Left cardiac atrium (tissue), 4 donors: ENCODE measurements at regions of chr9 and their contacts with region 1.

Region 1: DNA sequence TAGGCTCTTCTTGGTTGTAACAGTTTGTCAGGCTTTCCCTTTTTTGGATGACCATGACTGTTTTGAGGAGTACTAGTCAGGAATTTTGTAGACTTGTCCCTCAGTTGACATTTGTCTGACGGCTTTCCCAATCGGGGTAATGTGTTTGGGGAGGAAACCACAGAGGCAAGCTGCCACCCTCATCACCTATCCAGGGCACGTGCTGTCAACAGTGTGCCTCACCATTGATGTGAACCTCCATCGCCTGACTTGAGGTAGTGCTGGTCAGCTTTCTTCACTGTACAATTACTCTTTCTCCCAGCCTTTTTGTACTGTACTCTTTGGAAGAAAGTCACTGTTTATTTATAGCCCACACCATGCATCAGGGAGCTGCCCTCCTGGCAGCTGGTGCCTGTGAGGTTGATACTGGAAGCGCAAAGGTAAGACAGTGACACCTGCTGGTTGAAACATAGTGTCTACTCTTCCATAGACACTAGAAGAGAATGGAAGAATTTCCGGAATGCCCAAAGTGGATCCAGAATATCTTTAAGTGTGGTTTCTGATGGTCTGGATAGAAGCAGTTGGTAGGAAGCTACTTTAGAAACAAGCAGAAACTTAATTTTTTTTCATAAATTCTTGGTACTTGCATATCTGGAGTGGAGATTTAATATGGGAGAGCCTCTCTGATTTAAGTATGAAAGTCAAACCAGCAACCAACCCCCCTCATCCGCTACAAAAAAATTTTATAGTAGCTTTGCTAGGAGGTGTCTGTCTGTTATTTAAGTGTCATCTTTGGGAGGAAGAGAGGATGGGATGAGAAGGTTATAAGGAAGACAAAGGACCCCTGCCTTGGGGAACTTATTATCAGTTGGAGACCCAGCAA is 69.3 kb downstream of the SNX30 start:
- DNase-seq: peak; percentile 51
- ATAC-seq: peak; percentile 96 to 98

Region 2: GRCh38 chr9:112086627-112087026 is 733.2 kb before region 1 on chr9:
- intact Hi-C with region 1: loop called in 1 of 2 experiments (anchors 10 kb)
- DNase-seq: no peak
- ATAC-seq: no peak

Region 3: GRCh38 chr9:112486221-112487007 is 333.5 kb before region 1 on chr9 and contains the start of gene KIAA1958:
- intact Hi-C with region 1: loop called in 1 of 2 experiments (anchors 10 kb)
- DNase-seq: peak; percentile 90
- ATAC-seq: peak; percentile 91 to 97
- total RNA-seq, gene KIAA1958: 3.3 to 3.6 TPM

Region 4: DNA sequence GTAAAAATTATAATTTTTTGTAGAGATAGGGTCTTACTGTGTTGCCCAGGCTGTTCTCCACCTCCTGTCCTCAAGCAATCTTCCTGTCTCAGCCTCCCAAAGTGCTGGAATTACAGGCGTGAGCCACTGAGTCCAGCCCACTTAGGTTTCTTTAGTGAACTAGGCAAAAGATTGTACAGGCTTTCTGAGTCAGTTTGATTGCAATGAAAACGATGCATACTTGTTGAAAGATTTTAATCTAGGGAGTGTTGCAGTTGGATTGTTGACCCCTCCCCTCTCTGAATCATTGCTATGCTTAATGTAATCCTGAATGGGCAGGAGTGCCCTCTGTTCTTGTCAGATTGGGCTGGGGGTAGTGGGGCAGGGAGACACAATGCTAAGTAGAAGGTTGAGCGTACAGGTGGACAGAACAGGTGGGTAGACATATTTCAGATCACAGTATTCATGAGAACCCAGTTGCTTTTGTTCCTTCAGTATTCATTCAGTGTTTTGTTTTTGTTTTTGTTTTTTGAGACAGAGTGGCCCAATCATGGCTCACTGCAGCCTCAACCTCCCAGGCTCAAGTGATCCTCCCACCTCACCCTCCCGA is 263.3 kb before region 1 on chr9:
- intact Hi-C with region 1: no loop called
- DNase-seq: no peak
- ATAC-seq: no peak

Region 5: GRCh38 chr9:112717661-112718341 is 102.1 kb before region 1 on chr9 and contains the start of gene INIP:
- intact Hi-C with region 1: loop called in 1 of 2 experiments (anchors 5 kb)
- DNase-seq: peak; percentile 97
- ATAC-seq: peak; percentile 99 to 100
- total RNA-seq, gene INIP: 16.6 TPM